AG04450 (cell line): ENCODE measurements at regions of chr15 and their contacts with region 1.

Region 1: GRCh38 chr15:52227456-52227855 is 36.3 kb upstream of the GNB5 start:
- DNase-seq: peak; percentile 75
- H3K4me3 ChIP-seq: no peak overlapping the region
- H3K27ac ChIP-seq: no peak overlapping the region
- H3K27me3 ChIP-seq: peaks cover 6% of the 10 kb centered on the region
- CTCF ChIP-seq: peak; percentile 86

Region 2: DNA sequence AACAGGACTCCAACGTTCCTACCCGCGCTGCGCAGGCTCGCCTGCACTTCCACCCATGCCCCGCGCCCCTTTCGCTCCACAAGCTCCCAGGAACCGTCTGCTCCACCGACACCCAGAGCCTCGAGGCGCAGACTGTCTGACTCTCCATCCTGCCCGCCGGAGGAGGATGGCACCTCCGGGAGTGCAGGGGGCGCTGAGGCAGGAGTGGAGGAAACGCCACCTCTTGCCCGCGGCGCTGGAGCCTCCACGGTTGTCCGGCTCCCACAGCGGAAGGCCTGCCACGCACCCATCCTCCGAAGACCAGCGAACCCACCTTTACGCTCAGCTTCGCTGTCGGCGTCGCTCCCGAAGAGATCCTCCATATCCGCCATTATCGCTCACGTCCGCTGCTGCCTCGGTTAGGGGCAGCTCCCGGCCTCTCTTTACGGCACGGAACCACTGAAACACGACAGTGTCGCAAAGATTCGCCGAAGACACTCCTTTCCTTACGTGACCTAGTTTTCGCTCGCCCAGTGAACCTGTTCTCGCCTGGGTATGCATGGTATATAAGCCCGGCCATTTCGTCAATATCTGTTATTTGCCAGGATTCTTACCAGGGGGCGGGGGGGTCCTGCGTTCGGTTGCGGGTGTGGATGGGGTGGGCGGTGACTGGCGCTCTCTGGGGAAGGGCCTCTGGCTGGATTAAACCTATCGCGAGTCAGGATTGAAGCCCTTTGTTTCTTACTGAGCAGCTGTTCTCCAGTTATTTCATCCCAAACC is 255.9 kb before region 1 on chr15 and contains the start of gene LEO1:
- CTCF ChIA-PET with region 1: interaction called, 13 read pairs
- POLR2A ChIA-PET with region 1: no interaction called
- DNase-seq: peak; percentile 97
- H3K4me3 ChIP-seq: peak within 1 kb of the TSS; percentile 96
- H3K27ac ChIP-seq: peak within 1 kb of the TSS; percentile 87
- H3K27me3 ChIP-seq: no peaks in the 10 kb centered on the region
- CTCF ChIP-seq: peak; percentile 51
- polyA plus RNA-seq, gene LEO1: 6.8 and 8.0 TPM in 2 replicates

Region 3: DNA sequence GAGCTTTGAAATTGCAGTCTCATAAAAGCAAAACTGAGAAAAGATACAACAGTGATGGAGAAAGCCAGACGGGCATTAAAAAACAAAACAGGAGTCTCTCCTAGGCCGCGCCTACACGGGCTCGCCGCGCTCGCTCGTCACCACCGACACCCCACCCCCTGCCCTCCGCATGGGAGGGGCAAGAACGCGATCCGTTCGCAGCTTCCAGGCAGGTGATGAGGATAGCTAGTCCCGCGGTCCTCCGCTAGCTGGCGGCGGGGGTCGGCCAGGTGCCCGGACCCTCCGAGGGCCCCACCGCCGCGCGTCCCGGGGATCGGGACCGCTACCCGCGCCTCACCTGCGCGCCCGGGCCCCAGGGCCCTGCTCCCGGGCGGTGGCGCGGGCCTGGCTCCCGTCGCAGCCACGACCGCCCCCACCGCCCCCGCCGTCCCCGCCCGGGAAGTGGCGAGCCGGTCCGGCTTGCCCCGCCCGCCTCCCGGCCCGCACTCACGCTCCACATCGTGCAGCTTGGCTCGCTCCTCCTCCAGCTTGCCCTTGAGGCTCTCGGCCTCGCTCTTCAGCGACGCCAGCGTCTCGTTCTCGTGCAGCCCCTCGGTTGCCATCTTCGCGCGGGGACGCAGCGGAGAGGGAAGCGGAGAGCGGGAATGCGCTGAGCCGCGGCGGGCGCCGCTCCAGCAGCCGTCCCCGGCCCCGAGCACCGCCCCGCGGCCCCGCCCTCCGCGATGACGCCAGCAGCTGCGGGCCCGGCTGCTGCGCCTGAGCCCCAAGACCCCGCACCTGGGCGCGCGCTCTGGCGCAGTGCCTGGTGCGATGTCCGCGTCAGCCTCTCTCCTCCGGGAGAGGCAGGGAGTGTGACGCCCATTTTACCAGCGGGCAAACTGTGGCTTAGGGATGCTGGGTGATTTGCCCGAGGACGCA is 47.9 kb before region 1 on chr15:
- CTCF ChIA-PET with region 1: interaction called, 48 read pairs
- POLR2A ChIA-PET with region 1: no interaction called
- DNase-seq: no peak
- H3K4me3 ChIP-seq: peak overlapping the region; percentile 90
- H3K27ac ChIP-seq: peak overlapping the region; percentile 52
- H3K27me3 ChIP-seq: no peaks in the 10 kb centered on the region
- CTCF ChIP-seq: no peak

Region 4: DNA sequence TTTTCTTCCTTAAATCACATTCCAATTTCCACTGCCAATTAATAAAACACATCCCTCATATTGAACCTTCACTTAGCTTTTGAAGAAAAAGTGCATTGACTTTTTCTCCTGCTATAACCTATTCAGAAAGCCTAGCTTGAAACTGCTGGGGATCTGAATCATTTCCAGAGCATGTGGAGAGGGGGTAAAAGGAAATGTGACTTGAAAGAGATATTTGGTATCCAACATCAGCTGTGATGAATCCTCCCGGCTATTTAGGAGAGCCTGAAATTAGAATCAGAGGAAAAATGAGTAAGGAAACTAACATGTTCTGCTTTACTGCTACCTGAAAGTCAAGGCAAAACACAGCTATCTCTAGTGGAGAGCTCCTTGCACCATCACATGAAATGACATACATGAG is 33.7 kb before region 1 on chr15:
- CTCF ChIA-PET with region 1: interaction called, 13 read pairs
- POLR2A ChIA-PET with region 1: no interaction called
- DNase-seq: no peak
- H3K4me3 ChIP-seq: no peak overlapping the region
- H3K27ac ChIP-seq: no peak overlapping the region
- H3K27me3 ChIP-seq: peaks cover 5% of the 10 kb centered on the region
- CTCF ChIP-seq: no peak

Region 5: GRCh38 chr15:52208306-52208946 is 19.0 kb before region 1 on chr15:
- CTCF ChIA-PET with region 1: interaction called, 34 read pairs
- POLR2A ChIA-PET with region 1: no interaction called
- DNase-seq: peak; percentile 43
- H3K4me3 ChIP-seq: no peak overlapping the region
- H3K27ac ChIP-seq: no peak overlapping the region
- H3K27me3 ChIP-seq: peaks cover 29% of the 10 kb centered on the region
- CTCF ChIP-seq: peak; percentile 85

Region 6: DNA sequence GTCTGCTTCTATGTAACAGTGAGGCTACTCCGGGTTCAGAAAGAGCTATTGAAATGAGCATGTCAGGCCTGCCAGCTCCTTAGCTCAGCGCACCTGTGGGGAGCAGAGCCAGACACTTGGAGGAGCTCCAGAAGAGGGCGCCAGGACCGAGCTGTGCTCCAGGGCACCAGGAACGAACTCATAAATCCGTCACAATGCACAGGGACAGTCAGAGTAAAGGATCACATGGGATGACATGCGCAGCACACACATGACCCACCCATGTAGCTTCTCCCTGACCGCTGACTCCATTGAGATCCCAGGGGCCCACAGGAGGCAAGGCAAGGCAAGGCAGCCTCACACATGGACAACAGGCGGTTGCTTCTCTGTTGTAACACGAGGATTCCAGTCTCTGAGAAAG is 10.3 kb before region 1 on chr15:
- CTCF ChIA-PET with region 1: interaction called, 34 read pairs
- POLR2A ChIA-PET with region 1: no interaction called
- DNase-seq: no peak
- H3K4me3 ChIP-seq: no peak overlapping the region
- H3K27ac ChIP-seq: no peak overlapping the region
- H3K27me3 ChIP-seq: peaks cover 24% of the 10 kb centered on the region
- CTCF ChIP-seq: no peak

Region 7: DNA sequence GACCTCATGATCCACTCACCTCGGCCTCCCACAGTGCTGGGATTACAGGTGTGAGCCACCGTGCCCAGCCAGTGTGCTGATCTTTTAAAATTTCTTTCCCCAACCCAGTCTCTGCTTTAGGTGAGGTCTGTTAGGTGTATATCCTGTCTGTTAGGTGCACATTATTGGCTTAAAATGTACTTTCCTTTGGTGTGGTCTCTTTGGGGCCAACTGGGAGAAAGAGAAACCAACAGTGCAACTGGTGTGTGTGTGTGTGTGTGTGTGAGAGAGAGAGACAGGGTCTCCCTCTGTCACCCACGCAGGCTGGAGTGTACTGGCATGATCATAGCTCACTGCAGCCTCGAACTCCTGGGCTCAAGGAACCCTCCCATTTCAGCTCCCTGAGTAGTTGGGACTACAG is 14.0 kb after region 1 on chr15:
- CTCF ChIA-PET with region 1: interaction called, 14 read pairs
- POLR2A ChIA-PET with region 1: no interaction called
- DNase-seq: no peak
- H3K4me3 ChIP-seq: no peak overlapping the region
- H3K27ac ChIP-seq: no peak overlapping the region
- H3K27me3 ChIP-seq: peaks cover 12% of the 10 kb centered on the region
- CTCF ChIP-seq: no peak

Region 8: GRCh38 chr15:52417521-52417920 is 190.1 kb after region 1 on chr15:
- CTCF ChIA-PET with region 1: no interaction called
- POLR2A ChIA-PET with region 1: no interaction called
- DNase-seq: no peak
- H3K4me3 ChIP-seq: no peak overlapping the region
- H3K27ac ChIP-seq: no peak overlapping the region
- H3K27me3 ChIP-seq: no peaks in the 10 kb centered on the region
- CTCF ChIP-seq: no peak